Activated naive CD4-positive, alpha-beta T cell treated with anti-CD3 and anti-CD28 coated beads for 36 hours (primary cell): ENCODE measurements at regions of chr11 and their contacts with region 1.

Region 1: DNA sequence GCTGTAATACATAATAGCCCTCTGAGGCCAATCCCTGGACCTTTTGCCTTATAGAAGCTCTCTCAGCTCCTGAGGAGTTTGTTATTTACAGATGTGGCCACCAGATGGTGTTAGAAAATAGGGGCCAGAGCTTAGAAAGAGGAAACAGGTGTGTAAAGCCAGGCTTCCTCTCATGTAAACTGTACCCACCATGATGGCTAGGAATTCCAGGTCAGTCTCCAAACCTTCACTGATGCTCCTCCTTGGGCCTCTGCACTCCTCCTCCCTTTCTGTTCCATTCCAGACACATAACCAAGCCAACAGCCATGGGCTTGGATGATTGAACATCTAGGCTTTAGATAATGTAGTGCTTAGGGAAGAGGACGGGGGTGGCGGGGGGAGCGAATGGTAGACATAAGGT is 39.7 kb downstream of the USP35 start:
- DNase-seq: peak; percentile 28
- H3K4me3 Mint-ChIP-seq: no peak overlapping the region
- H3K27ac Mint-ChIP-seq: no peak overlapping the region
- H3K4me1 Mint-ChIP-seq: peaks cover 18% of the 10 kb centered on the region
- H3K27me3 Mint-ChIP-seq: no peaks in the 10 kb centered on the region

Region 2: GRCh38 chr11:78202733-78203167 is 25.7 kb before region 1 on chr11:
- CTCF ChIA-PET with region 1: no interaction called
- intact Hi-C with region 1: loop called (anchors 1 kb)
- DNase-seq: peak; percentile 73
- H3K4me3 Mint-ChIP-seq: peak overlapping the region; percentile 59
- H3K27ac Mint-ChIP-seq: peak overlapping the region; percentile 95
- H3K4me1 Mint-ChIP-seq: peaks cover 43% of the 10 kb centered on the region
- H3K27me3 Mint-ChIP-seq: no peaks in the 10 kb centered on the region

Region 3: GRCh38 chr11:78290293-78291176 is 62.1 kb after region 1 on chr11:
- CTCF ChIA-PET with region 1: no interaction called
- intact Hi-C with region 1: loop called (anchors 2 kb)
- DNase-seq: peak; percentile 45
- H3K4me3 Mint-ChIP-seq: no peak overlapping the region
- H3K27ac Mint-ChIP-seq: peak overlapping the region; percentile 63
- H3K4me1 Mint-ChIP-seq: peaks cover 27% of the 10 kb centered on the region
- H3K27me3 Mint-ChIP-seq: no peaks in the 10 kb centered on the region

Region 4: GRCh38 chr11:78397387-78397786 is 168.9 kb after region 1 on chr11:
- CTCF ChIA-PET with region 1: no interaction called
- intact Hi-C with region 1: loop called (anchors 1 kb)
- DNase-seq: peak; percentile 19
- H3K4me3 Mint-ChIP-seq: no peak overlapping the region
- H3K27ac Mint-ChIP-seq: no peak overlapping the region
- H3K4me1 Mint-ChIP-seq: no peaks in the 10 kb centered on the region
- H3K27me3 Mint-ChIP-seq: no peaks in the 10 kb centered on the region

Region 5: DNA sequence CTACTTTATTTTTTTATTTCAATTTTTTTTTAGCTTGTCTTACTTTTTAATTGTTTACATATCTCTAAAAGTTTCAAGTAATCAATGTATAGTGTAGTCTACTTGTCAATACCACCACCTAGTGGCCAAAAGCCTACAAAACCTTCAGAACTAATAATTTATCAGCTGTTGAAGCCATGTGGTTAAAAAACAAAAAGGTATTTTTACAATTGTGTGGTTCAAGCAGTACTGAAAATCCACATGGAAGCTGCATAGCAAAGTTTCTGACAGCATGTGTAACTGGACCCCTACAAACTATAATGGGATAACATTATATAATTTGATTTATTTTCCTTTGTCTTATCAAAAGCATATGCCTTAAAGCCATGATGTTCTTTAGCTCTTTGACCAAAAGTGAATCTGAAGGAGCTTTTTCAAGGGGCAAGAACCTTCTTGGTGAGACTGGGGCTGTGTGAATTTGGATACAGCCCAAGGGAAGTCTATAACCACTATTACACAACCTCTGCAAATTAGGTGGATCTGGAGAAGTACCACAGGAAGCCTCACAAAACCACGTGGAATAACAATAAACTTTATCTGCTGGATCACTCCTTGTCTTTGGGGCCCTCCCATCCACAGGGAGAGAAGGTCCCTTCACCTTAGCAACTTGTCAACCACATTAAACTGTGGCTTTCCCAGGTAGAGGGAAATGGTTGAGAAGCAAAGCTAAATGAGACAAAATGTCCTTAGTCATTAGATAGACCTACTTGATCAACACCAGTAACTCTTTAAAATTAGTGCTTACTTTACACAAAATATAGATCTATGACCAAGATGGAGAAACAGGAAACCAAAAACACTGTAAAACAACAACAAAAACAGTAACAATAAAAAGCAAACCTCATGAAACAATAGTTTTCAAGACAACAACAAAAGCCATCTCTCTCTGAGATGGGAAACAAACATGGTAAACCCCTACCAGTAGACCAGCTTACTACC is 336.3 kb after region 1 on chr11:
- CTCF ChIA-PET with region 1: interaction called, 8 read pairs
- intact Hi-C with region 1: loop called (anchors 1 kb)
- DNase-seq: peak; percentile 54
- H3K4me3 Mint-ChIP-seq: no peak overlapping the region
- H3K27ac Mint-ChIP-seq: no peak overlapping the region
- H3K4me1 Mint-ChIP-seq: peaks cover 27% of the 10 kb centered on the region
- H3K27me3 Mint-ChIP-seq: no peaks in the 10 kb centered on the region

Region 6: DNA sequence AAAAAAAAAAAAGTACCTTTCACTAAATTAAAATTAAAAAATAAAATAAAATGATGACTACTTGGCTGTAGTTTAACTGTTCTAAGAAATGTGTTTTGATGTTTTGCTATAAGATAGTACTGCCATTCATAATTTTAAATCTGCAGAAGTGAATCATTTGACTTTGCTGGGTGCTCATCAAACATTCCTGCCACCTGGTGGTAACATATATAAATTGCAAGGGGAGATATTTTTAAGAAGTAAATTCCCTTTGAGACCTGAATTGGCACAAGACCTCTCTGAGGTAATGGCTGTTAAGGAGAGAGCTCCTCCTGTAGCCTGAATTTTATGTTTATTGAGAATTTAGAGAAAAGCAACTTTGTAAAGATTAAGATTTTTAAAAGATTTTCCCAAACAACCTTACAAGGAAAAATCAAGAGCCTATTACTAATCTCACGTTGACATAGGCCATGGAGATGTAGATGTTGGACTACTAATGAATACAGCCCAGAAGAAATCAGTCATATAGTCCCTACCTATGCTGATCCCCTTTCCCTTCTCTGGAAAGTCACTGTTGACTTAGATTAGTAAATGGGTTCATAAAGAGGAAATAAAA is 358.1 kb after region 1 on chr11:
- CTCF ChIA-PET with region 1: no interaction called
- intact Hi-C with region 1: loop called (anchors 5 kb)
- DNase-seq: no peak
- H3K4me3 Mint-ChIP-seq: no peak overlapping the region
- H3K27ac Mint-ChIP-seq: no peak overlapping the region
- H3K4me1 Mint-ChIP-seq: no peaks in the 10 kb centered on the region
- H3K27me3 Mint-ChIP-seq: no peaks in the 10 kb centered on the region